HEK293T (cell line): ENCODE measurements at regions of chr1 and their contacts with region 1.

Region 1: GRCh38 chr1:153967082-153968000 is at the start of gene CREB3L4:
- DNase-seq: peak; percentile 91

Region 2: GRCh38 chr1:153783233-153784190 is 183.8 kb before region 1 on chr1:
- CTCF ChIA-PET with region 1: no interaction called
- POLR2A ChIA-PET with region 1: interaction called, 10 read pairs
- DNase-seq: peak; percentile 99

Region 3: DNA sequence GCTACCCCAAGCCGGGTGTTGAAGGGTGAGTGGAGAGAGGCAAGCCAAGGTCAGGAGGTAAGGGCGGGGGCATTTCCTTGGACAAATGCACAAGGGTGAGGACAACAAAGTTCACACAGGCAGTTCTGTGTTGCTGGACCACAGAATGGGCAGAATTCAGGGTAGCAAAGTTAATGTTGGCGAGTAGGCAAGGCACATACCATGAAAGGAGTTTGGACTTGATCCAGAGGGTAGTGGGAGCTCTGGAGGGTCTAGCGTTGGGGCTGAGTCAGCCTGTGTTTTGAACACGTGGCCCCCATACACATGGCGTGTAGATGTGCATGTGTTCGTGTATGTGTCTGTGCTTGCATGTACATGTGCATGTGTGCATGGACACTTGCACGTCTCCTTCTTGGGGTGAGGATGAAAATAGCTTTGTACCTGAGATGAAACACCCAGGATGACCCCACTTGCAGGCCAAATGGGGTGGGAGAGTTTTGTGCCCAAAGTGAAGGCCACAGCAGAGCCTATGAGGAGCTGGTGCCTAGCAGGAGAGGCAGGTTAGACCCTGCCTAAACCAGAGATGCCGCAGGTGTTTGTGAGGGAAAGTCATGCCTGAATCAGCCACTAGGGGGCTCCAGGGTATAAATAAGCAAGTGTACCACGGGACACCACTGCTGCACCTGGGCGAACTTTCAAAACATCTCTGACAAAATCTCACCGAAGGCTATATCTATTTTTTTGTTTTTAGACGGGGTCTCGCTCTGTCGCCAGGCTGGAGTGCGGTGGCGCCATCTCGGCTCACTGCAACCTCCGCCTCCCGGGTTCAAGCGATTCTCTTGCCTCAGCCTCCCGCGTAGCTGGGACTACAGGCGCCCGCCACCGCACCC is 170.3 kb before region 1 on chr1:
- CTCF ChIA-PET with region 1: interaction called, 6 read pairs
- POLR2A ChIA-PET with region 1: interaction called, 12 read pairs
- DNase-seq: peak; percentile 90

Region 4: GRCh38 chr1:153922972-153923925 is 44.1 kb before region 1 on chr1 and contains the start of gene GATAD2B:
- CTCF ChIA-PET with region 1: interaction called, 3 read pairs
- POLR2A ChIA-PET with region 1: interaction called, 45 read pairs
- DNase-seq: peak; percentile 99

Region 5: GRCh38 chr1:153928791-153929341 is 38.5 kb before region 1 on chr1:
- CTCF ChIA-PET with region 1: no interaction called
- POLR2A ChIA-PET with region 1: interaction called, 45 read pairs
- DNase-seq: no peak

Region 6: GRCh38 chr1:153946622-153947241 is 20.6 kb before region 1 on chr1 and contains the start of gene DENND4B:
- CTCF ChIA-PET with region 1: interaction called, 9 read pairs
- POLR2A ChIA-PET with region 1: interaction called, 47 read pairs
- DNase-seq: peak; percentile 98

Region 7: GRCh38 chr1:153977250-153978240 is 10.2 kb after region 1 on chr1 and contains the start of gene JTB:
- CTCF ChIA-PET with region 1: interaction called, 9 read pairs
- POLR2A ChIA-PET with region 1: interaction called, 165 read pairs
- DNase-seq: peak; percentile 89